Mammary epithelial cell (primary cell): ENCODE measurements at regions of chr1 and their contacts with region 1.

Region 1: GRCh38 chr1:206030714-206031113 is 7.0 kb upstream of the CTSE start:
- DNase-seq: peak; percentile 90
- H3K4me3 ChIP-seq: no peak overlapping the region
- H3K27ac ChIP-seq: no peak overlapping the region
- H3K4me1 ChIP-seq: peaks cover 19% of the 10 kb centered on the region
- H3K27me3 ChIP-seq: no peaks in the 10 kb centered on the region
- CTCF ChIP-seq: peak; percentile 96 to 99

Region 2: DNA sequence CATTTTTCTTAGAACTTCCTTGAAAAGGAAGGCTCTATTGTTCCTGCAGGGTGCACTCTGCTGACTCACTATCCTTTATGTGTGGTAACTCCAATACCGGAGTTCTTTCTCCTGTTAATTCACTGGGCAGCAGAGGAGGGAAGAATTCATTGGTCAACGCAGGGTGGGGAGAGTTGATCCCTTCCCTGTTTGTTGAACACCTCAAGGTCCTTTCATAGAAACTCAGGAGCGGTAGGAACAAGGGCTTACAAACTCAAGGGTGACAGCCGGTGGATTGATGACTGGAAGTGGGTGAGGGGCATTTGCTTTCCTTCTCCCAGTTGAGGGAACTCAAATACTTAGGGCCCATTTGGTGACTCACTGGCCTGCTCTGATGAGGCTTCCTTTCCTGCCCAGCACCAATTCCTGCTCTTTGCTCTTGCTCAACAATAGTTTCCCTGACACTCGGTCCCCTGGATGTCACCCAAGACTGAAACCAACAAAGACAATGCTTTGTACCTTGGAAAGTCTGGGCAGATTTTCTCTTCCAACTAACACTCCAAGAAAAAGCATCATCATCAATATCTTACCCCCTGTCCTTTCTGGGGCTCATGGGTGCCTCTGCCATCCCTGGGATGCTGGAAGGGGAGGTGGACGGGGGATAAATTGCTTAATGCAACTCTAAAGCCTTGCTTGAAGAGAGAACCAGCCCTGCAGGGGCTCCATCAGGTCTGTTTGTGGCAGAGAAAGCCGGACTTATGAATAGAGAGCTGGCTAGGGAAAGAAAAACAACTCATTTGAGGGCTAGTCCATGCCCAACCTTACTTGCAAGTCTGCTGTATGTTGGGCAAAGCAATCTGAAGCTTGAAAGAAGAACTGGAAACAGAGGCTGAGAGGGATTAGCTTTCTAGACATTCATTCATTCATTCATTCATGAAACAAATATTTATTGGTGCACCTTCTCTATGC is 96.8 kb before region 1 on chr1:
- CTCF ChIA-PET with region 1: no interaction called
- dilution Hi-C with region 1: no loop called
- in situ Hi-C with region 1: no loop called
- intact Hi-C with region 1: no loop called
- DNase-seq: peak; percentile 54
- H3K4me3 ChIP-seq: no peak overlapping the region
- H3K27ac ChIP-seq: no peak overlapping the region
- H3K4me1 ChIP-seq: peaks cover 21% of the 10 kb centered on the region
- H3K27me3 ChIP-seq: peaks cover 8% of the 10 kb centered on the region
- CTCF ChIP-seq: no peak

Region 3: GRCh38 chr1:205983925-205984725 is 46.6 kb before region 1 on chr1:
- CTCF ChIA-PET with region 1: interaction called, 3 read pairs
- dilution Hi-C with region 1: no loop called
- in situ Hi-C with region 1: no loop called
- intact Hi-C with region 1: loop called (anchors 1 kb)
- DNase-seq: peak; percentile 96
- H3K4me3 ChIP-seq: peak overlapping the region in 1 of 3 experiments; percentile 2
- H3K27ac ChIP-seq: no peak overlapping the region
- H3K4me1 ChIP-seq: peaks cover 32% of the 10 kb centered on the region
- H3K27me3 ChIP-seq: no peaks in the 10 kb centered on the region
- CTCF ChIP-seq: peak; percentile 79 to 90

Region 4: DNA sequence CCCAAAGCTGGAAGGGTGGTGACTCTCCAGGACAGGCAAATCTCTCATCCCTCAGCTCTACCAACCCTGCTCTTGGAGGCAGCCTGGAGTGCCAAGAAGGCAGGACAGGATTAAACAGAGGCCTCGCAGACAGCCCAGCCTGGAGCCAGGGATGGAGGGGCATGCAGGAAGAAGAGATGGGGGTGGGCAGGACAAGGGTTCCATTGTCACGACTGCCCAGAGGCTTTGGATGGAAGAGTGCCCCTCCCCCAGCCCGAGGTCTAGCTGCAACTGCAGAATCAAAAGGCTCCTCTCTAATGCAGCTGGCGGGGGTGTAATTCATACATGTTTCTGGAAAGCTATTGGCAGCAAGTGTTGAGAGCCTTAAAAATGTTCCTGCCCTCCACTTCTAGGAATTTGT is 36.4 kb before region 1 on chr1:
- CTCF ChIA-PET with region 1: no interaction called
- dilution Hi-C with region 1: loop called (anchors 5 kb)
- in situ Hi-C with region 1: no loop called
- intact Hi-C with region 1: no loop called
- DNase-seq: no peak
- H3K4me3 ChIP-seq: no peak overlapping the region
- H3K27ac ChIP-seq: no peak overlapping the region
- H3K4me1 ChIP-seq: peaks cover 7% of the 10 kb centered on the region
- H3K27me3 ChIP-seq: no peaks in the 10 kb centered on the region
- CTCF ChIP-seq: no peak

Region 5: GRCh38 chr1:206001476-206001888 is 29.2 kb before region 1 on chr1:
- CTCF ChIA-PET with region 1: no interaction called
- dilution Hi-C with region 1: no loop called
- in situ Hi-C with region 1: no loop called
- intact Hi-C with region 1: loop called (anchors 1 kb)
- DNase-seq: peak; percentile 94
- H3K4me3 ChIP-seq: peak overlapping the region; percentile 45 to 62 (median 60)
- H3K27ac ChIP-seq: peak overlapping the region; percentile 76
- H3K4me1 ChIP-seq: peaks cover 53% of the 10 kb centered on the region
- H3K27me3 ChIP-seq: no peaks in the 10 kb centered on the region
- CTCF ChIP-seq: peak in 1 of 2 donors; percentile 3

Region 6: DNA sequence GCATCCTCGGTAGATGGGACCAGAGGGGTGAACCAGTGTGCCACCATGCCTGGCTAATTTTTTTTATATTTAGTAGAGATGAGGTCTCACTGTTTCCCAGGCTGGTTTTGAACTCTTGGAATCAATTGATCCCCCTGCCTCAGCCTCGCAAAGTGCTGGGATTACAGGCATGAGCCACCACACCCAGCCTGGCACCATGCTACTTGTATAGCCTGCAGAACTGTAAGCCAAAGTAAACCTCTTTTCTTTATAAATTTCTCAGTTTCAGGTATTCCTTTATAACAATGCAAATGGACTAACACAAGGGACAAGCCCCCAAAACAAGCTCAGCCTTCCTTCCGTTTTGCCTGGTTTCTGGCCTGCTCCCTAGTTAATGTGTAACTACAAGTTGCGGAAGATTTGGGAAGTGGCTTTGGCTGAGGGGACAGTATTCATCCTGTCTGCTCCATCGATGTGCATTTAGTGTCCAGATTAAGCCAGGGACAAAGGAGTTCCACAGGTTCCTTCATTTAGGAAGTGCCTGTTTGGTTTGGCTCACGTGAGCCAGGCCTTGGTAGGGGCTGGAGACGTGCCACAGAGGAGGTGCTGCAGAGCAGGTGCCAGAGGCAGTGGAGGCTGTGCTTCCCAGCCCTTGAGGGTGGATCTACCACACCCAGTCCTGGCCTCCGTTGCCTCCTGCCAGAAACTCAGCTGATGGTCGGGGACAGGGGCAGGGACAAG is 82.0 kb after region 1 on chr1:
- CTCF ChIA-PET with region 1: no interaction called
- dilution Hi-C with region 1: loop called (anchors 5 kb)
- in situ Hi-C with region 1: no loop called
- intact Hi-C with region 1: no loop called
- DNase-seq: no peak
- H3K4me3 ChIP-seq: no peak overlapping the region
- H3K27ac ChIP-seq: no peak overlapping the region
- H3K4me1 ChIP-seq: peaks cover 18% of the 10 kb centered on the region
- H3K27me3 ChIP-seq: peaks cover 3% of the 10 kb centered on the region
- CTCF ChIP-seq: no peak